Sigmoid colon (tissue), 7 donors: ENCODE measurements at regions of chr1 and their contacts with region 1.

Region 1: DNA sequence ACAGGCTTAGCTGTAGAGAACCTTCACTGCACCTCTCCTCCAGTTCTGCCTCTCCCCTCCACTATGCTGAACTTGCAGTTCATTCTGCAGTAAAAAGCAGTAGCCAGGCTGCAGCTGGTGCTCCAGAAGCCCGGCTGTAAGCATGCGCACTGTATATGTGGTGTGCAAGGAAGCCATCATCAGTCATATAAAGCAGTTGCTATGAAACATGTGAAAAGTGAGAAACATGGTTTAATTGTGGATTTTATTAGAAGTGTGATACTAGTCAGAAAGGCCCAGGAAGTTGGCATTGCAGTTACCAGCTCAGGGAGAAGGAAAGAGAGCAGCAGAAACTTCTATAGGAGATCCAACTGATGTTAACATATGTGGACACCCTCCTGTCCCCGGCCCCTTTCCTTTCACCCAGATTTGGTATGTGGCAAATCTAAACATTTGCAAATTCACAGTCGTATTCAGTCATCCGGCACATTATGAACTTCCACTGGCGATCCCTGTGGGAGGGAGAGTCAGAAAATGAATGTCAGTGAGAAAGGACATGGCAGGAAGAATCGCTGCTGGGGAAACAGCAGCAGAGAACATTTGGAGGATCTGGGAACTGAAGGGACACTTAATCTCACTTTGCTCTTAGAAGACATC is 32.8 kb downstream of the DPT start:
- DNase-seq: peak; percentile 77
- H3K4me3 ChIP-seq: no peak overlapping the region
- H3K27ac ChIP-seq: peak overlapping the region in 3 of 4 donors; percentile 64 to 75 (median 75)
- H3K4me1 ChIP-seq: peaks cover 0 to 50% (median 38%) of the 10 kb centered on the region in 4 donors
- H3K27me3 ChIP-seq: no peaks in the 10 kb centered on the region
- CTCF ChIP-seq: no peak
- EP300 ChIP-seq: peak in 1 of 4 donors; percentile 46
- POLR2A ChIP-seq: no peak

Region 2: DNA sequence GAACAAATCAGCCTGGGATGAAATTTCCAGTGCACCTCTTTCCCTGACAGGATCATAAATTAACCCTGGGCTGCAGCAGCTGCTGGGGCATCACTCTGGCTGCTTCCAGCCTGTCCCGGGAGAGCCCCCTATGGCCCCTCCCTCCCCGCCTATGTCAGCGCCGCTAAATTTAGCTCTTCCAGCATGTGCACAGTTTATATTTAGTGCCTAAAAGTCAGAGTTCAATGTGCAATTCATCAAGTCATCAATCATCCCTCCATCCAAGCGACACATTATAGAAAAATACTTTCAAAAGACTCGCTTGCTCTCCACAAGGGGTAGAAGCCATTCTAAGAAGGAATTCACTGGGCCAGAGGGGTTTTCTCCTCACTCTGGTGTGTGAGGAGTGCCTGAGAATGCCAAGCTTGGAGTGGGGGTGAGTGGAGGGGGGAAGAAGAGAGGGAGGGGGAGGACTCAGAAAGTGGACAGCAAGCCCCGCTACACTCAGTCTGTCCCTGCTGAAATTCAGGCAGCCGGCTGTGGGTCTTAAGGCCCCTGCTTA is 82.5 kb before region 1 on chr1:
- intact Hi-C with region 1: loop called (anchors 5 kb)
- DNase-seq: peak; percentile 75
- H3K4me3 ChIP-seq: no peak overlapping the region
- H3K27ac ChIP-seq: peak overlapping the region; percentile 35 to 73 (median 55)
- H3K4me1 ChIP-seq: peaks cover 0 to 40% (median 37%) of the 10 kb centered on the region in 4 donors
- H3K27me3 ChIP-seq: no peaks in the 10 kb centered on the region
- CTCF ChIP-seq: no peak
- EP300 ChIP-seq: peak in 2 of 4 donors; percentile 26 to 38
- POLR2A ChIP-seq: no peak